Panc1 (cell line): ENCODE measurements at regions of chr16 and their contacts with region 1.

Region 1: DNA sequence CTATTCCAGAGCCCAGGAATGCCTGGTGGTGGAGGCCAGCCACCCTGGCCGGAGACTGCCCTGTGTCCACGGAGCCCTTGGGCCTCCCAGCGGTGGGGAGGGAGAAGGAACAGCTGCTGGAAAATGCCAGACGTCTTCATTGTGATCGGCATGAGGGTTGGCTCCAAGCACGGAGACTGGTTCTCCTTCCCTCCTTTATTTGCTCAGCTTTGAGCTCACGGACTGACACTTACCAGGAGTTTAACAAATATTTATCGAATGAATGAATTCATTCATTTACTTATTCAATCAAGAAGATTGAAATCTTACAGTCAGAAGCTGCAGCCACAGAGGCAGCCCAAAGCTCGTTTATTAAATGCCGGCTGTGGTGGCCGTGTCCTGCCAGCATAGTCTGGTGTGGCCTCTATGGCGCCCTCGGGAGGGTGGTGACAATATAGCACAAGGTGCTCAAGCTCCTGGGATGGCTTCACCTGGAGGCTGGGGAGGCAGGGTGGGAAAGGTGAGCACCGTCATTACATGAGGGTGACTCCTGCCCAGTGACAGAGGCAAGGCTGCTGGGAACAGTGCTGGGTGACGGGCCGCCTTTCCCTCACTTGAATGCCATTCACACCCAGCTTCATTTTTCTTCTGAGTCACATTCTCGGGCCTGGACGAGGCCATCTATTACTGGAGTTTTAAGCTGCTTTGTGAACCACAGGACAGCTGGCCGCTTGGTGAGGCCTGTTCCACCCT is 31.0 kb upstream of the JPH3 start:
- DNase-seq: no peak
- ATAC-seq: peak; percentile 95
- H3K4me3 ChIP-seq: no peak overlapping the region
- H3K27ac ChIP-seq: no peak overlapping the region
- H3K4me1 ChIP-seq: peaks cover 10% of the 10 kb centered on the region
- H3K27me3 ChIP-seq: no peaks in the 10 kb centered on the region
- CTCF ChIP-seq: peak; percentile 77

Region 2: DNA sequence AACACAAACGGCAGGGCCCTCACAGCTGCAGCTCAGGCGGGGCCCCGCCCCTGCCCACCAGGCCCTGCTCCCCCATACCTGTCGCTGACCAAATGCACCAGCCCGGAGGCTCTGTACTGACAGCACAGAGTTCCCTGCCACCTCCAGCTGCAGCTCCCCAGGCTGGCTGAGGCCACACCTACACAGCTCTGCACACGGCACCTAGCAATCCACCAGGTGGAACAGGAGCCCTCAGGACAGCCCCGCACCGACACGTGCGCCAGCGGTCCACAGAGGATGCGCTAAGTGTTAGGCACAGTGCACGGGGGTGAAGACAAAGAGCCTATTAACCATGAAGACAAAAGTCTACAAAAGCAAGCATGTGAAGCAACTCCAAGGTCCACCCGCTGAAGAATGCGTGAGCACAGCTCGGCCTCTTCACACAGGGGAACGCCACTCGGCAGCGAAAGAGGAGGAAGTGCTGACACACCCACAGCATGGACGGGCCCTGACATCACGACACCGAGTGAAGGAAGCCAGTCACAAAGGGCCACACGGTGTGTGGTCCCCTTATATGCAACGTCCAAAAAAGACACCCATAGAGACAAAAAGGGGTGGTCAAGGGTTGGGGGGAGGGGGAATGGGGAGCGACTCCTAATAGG is 83.8 kb before region 1 on chr16:
- CTCF ChIA-PET with region 1: interaction called, 12 read pairs
- POLR2A ChIA-PET with region 1: no interaction called
- in situ Hi-C with region 1: no loop called
- intact Hi-C with region 1: no loop called
- DNase-seq: no peak
- ATAC-seq: peak; percentile 74
- H3K4me3 ChIP-seq: peak overlapping the region; percentile 14 to 39; a peak in 3 of 4 replicates
- H3K27ac ChIP-seq: peak overlapping the region; percentile 73
- H3K4me1 ChIP-seq: peaks cover 40% of the 10 kb centered on the region
- H3K27me3 ChIP-seq: no peaks in the 10 kb centered on the region
- CTCF ChIP-seq: no peak

Region 3: GRCh38 chr16:87515475-87516330 is 55.6 kb before region 1 on chr16:
- CTCF ChIA-PET with region 1: no interaction called
- POLR2A ChIA-PET with region 1: no interaction called
- in situ Hi-C with region 1: no loop called
- intact Hi-C with region 1: no loop called
- DNase-seq: no peak
- ATAC-seq: no peak
- H3K4me3 ChIP-seq: no peak overlapping the region
- H3K27ac ChIP-seq: no peak overlapping the region
- H3K4me1 ChIP-seq: no peaks in the 10 kb centered on the region
- H3K27me3 ChIP-seq: no peaks in the 10 kb centered on the region
- CTCF ChIP-seq: no peak

Region 4: DNA sequence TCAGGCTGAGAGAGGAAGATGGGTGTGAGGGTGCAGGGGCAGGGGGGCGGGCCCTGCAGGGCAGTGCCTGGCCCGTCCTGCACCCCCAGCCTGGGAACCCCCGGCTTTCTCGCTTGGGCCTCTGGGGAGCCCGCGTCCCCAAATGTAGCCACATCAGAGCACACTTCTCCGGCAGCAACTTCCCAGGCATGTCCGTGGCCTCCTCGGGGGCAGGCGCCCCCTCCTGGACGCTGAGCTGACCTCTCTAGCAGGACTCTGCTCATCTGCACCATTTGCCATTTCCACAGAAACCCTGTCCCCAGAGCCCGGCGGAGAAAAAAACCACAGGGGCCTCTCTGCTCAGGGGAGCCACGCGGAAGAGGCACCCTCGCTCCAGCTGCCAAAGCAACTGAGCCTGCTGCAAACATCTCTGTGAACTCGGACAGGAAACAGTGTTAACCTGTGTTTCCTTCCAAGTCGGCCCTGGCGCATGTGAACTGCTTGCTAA is 131.1 kb after region 1 on chr16:
- CTCF ChIA-PET with region 1: no interaction called
- POLR2A ChIA-PET with region 1: no interaction called
- in situ Hi-C with region 1: no loop called
- intact Hi-C with region 1: no loop called
- DNase-seq: no peak
- ATAC-seq: peak; percentile 65; the same call in 1 of the 2 replicates
- H3K4me3 ChIP-seq: no peak overlapping the region
- H3K27ac ChIP-seq: no peak overlapping the region
- H3K4me1 ChIP-seq: no peaks in the 10 kb centered on the region
- H3K27me3 ChIP-seq: no peaks in the 10 kb centered on the region
- CTCF ChIP-seq: peak; percentile 78